K562 (cell line): ENCODE measurements at regions of chr1 and their contacts with region 1.

Region 1: GRCh38 chr1:44553771-44554170 is 120.5 kb downstream of the TMEM53 start:
- DNase-seq: no peak
- ATAC-seq: no peak
- H3K4me3 ChIP-seq: no peak overlapping the region
- H3K27ac ChIP-seq: no peak overlapping the region
- H3K4me1 ChIP-seq: no peaks in the 10 kb centered on the region
- H3K27me3 ChIP-seq: peaks cover 63 to 65% of the 10 kb centered on the region in 2 experiments
- CTCF ChIP-seq: no peak
- EP300 ChIP-seq: no peak
- POLR2A ChIP-seq: no peak
- RAD21 ChIP-seq: no peak

Region 2: GRCh38 chr1:45079533-45079932 is 525.8 kb after region 1 on chr1:
- CTCF ChIA-PET with region 1: no interaction called
- POLR2A ChIA-PET with region 1: no interaction called
- in situ Hi-C with region 1: loop called (anchors 10 kb)
- intact Hi-C with region 1: no loop called
- DNase-seq: no peak
- ATAC-seq: no peak; the same call in 1 of the 3 replicates
- H3K4me3 ChIP-seq: no peak overlapping the region
- H3K27ac ChIP-seq: no peak overlapping the region
- H3K4me1 ChIP-seq: no peaks in the 10 kb centered on the region
- H3K27me3 ChIP-seq: peaks cover 4 to 24% of the 10 kb centered on the region in 2 experiments; a peak in 2 of 5 replicates
- CTCF ChIP-seq: no peak
- EP300 ChIP-seq: no peak
- POLR2A ChIP-seq: no peak
- RAD21 ChIP-seq: no peak